Sigmoid colon (tissue), 7 donors: ENCODE measurements at regions of chr1 and their contacts with region 1.

Region 1: DNA sequence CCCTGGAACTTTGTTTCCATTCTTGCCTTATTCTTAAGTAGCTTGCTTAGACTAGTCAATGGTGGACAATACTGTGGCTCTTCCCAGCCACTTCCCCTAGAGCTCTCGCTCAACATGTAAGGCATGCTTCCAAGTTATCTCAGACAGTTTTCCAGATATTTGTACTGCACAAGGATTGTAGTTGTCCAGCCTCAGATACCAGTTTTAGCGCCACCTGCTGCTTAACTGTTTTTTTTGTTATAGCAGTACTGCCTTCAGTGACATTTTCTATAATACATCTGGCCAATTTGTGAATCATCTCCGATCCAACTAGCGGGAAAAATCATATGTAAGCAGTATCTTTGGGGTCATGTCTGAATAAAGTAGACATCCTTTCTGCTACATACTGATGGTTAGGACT is 346.7 kb upstream of the ADGRL4 start:
- DNase-seq: no peak
- H3K4me3 ChIP-seq: no peak overlapping the region
- H3K27ac ChIP-seq: no peak overlapping the region
- H3K4me1 ChIP-seq: no peaks in the 10 kb centered on the region
- H3K27me3 ChIP-seq: no peaks in the 10 kb centered on the region
- CTCF ChIP-seq: peak in 2 of 4 experiments; percentile 8 to 20
- EP300 ChIP-seq: no peak
- POLR2A ChIP-seq: no peak

Region 2: GRCh38 chr1:78839704-78840277 is 513.4 kb before region 1 on chr1:
- intact Hi-C with region 1: loop called (anchors 5 kb)
- DNase-seq: no peak
- H3K4me3 ChIP-seq: no peak overlapping the region
- H3K27ac ChIP-seq: no peak overlapping the region
- H3K4me1 ChIP-seq: peaks cover 0 to 30% (median 25%) of the 10 kb centered on the region in 4 donors
- H3K27me3 ChIP-seq: no peaks in the 10 kb centered on the region
- CTCF ChIP-seq: peak in 3 of 4 experiments; percentile 8 to 60 (median 36)
- EP300 ChIP-seq: no peak
- POLR2A ChIP-seq: no peak